CD8-positive, alpha-beta memory T cell (primary cell): ENCODE measurements at regions of chr9 and their contacts with region 1.

Region 1: DNA sequence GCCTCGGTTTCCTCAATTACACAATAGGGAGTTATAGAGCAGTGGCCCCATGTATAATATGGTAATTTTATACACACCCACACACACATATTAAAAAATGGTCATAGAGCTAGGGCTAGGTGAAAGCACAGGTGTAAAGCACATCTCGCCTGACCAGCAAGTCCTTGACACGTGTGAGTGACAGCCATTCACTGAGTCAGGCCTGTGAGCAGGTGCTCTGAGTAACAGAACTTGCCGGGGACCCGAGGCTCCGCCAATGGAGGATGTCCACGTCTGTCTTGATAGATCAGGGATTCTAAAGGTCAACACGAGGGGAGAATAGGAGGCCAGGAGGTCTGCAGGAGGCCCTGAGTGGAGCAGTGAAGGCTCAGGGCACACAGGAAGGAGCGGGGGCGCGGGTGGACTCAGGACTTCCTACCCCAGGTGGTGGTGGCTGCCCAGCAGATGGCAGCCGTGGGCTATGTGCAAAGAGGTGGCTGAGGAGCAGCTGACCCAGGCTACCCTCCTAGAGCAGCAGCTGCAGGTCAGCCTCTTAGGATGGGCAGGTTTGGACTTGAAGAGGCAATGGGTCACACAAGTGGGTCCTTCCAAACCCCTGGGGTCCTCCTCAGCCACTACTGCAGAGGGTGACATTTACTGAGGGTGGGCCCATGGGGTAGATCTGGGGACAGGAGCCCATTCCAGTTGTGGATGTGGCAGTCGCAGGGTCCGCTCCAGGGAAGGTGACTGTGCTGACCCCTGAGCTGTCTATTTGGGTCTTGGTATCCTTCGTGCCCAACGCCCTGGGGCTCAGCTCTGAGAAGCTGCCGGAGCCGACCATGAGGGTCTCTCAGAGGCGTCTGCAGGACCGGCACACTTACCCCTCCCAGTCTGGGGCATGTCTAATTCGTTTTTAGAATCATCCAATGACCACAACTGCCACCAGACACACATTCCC is 45.9 kb downstream of the PRRT1B start:
- DNase-seq: peak; percentile 66 to 84 (median 68)
- H3K4me3 ChIP-seq: no peak overlapping the region
- H3K4me3 Mint-ChIP-seq: peak overlapping the region in 6 of 7 donors; percentile 29 to 87 (median 48)
- H3K27ac ChIP-seq: no peak overlapping the region
- H3K27ac Mint-ChIP-seq: peak overlapping the region; percentile 76 to 91 (median 86)
- H3K4me1 ChIP-seq: peaks cover 16% of the 10 kb centered on the region
- H3K4me1 Mint-ChIP-seq: peaks cover 25 to 51% (median 38%) of the 10 kb centered on the region in 3 donors
- H3K27me3 ChIP-seq: no peaks in the 10 kb centered on the region
- H3K27me3 Mint-ChIP-seq: peaks cover 0 to 1% of the 10 kb centered on the region in 2 donors

Region 2: DNA sequence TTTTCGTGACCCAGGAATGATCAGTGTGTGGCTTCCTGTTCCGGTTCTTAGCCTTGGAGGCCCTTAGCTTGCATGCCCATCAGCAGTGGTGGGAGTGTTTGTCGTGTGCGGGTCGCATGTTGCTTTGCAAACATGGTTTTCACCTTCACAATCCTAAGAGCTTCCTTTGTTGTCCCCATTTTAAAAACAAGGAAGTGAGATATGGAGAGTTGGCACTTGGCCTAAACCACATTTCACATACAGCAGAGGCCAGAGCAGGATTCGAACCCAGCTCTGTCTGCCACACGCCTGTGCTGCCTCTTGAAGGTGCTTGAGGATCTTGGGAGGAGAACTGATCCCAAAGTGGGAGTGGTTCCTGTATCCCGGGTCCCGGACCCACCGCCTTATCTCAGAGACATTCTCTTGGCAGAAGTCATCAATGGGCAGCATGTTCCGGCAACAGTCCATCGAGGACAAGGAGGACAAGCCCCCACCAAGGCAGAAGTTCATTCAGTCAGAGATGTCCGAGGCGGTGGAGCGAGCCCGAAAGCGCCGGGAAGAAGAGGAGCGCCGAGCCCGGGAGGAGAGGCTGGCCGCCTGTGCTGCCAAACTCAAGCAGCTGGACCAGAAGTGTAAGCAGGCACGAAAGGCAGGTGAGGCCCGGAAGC is 126.7 kb before region 1 on chr9:
- CTCF ChIA-PET with region 1: no interaction called
- POLR2A ChIA-PET with region 1: no interaction called
- DNase-seq: no peak
- H3K4me3 ChIP-seq: no peak overlapping the region
- H3K4me3 Mint-ChIP-seq: peak overlapping the region in 1 of 7 donors; percentile 74
- H3K27ac ChIP-seq: no peak overlapping the region
- H3K27ac Mint-ChIP-seq: no peak overlapping the region
- H3K4me1 ChIP-seq: no peaks in the 10 kb centered on the region
- H3K4me1 Mint-ChIP-seq: peaks cover 9 to 18% (median 11%) of the 10 kb centered on the region in 3 donors
- H3K27me3 ChIP-seq: no peaks in the 10 kb centered on the region
- H3K27me3 Mint-ChIP-seq: no peaks in the 10 kb centered on the region

Region 3: GRCh38 chr9:131603199-131603598 is 12.0 kb after region 1 on chr9:
- CTCF ChIA-PET with region 1: interaction called, 10 read pairs
- POLR2A ChIA-PET with region 1: interaction called, 3 read pairs
- DNase-seq: no peak
- H3K4me3 ChIP-seq: no peak overlapping the region
- H3K4me3 Mint-ChIP-seq: no peak overlapping the region
- H3K27ac ChIP-seq: no peak overlapping the region
- H3K27ac Mint-ChIP-seq: peak overlapping the region in 4 of 8 donors; percentile 7 to 85 (median 28)
- H3K4me1 ChIP-seq: no peaks in the 10 kb centered on the region
- H3K4me1 Mint-ChIP-seq: peaks cover 6 to 14% (median 9%) of the 10 kb centered on the region in 3 donors
- H3K27me3 ChIP-seq: no peaks in the 10 kb centered on the region
- H3K27me3 Mint-ChIP-seq: no peaks in the 10 kb centered on the region

Region 4: GRCh38 chr9:131678499-131679111 is 87.4 kb after region 1 on chr9:
- CTCF ChIA-PET with region 1: interaction called, 19 read pairs
- POLR2A ChIA-PET with region 1: no interaction called
- DNase-seq: peak in 4 of 5 donors; percentile 53 to 92 (median 66)
- H3K4me3 ChIP-seq: peak overlapping the region; percentile 16
- H3K4me3 Mint-ChIP-seq: peak overlapping the region; percentile 41 to 94 (median 82)
- H3K27ac ChIP-seq: peak overlapping the region; percentile 52
- H3K27ac Mint-ChIP-seq: peak overlapping the region; percentile 89 to 99 (median 96)
- H3K4me1 ChIP-seq: peaks cover 54% of the 10 kb centered on the region
- H3K4me1 Mint-ChIP-seq: peaks cover 77 to 100% (median 99%) of the 10 kb centered on the region in 3 donors
- H3K27me3 ChIP-seq: no peaks in the 10 kb centered on the region
- H3K27me3 Mint-ChIP-seq: no peaks in the 10 kb centered on the region

Region 5: GRCh38 chr9:131733541-131734061 is 142.4 kb after region 1 on chr9:
- CTCF ChIA-PET with region 1: interaction called, 119 read pairs
- POLR2A ChIA-PET with region 1: interaction called, 3 read pairs
- DNase-seq: peak in 4 of 5 donors; percentile 33 to 65 (median 44)
- H3K4me3 ChIP-seq: peak overlapping the region; percentile 52
- H3K4me3 Mint-ChIP-seq: peak overlapping the region; percentile 73 to 90 (median 84)
- H3K27ac ChIP-seq: peak overlapping the region; percentile 61
- H3K27ac Mint-ChIP-seq: peak overlapping the region; percentile 78 to 99 (median 92)
- H3K4me1 ChIP-seq: peaks cover 95% of the 10 kb centered on the region
- H3K4me1 Mint-ChIP-seq: peaks cover 86 to 95% (median 93%) of the 10 kb centered on the region in 3 donors
- H3K27me3 ChIP-seq: no peaks in the 10 kb centered on the region
- H3K27me3 Mint-ChIP-seq: no peaks in the 10 kb centered on the region

Region 6: GRCh38 chr9:131739980-131740648 is 148.9 kb after region 1 on chr9 and contains the start of gene RAPGEF1:
- CTCF ChIA-PET with region 1: interaction called, 119 read pairs
- POLR2A ChIA-PET with region 1: interaction called, 3 read pairs
- DNase-seq: peak; percentile 73 to 86 (median 78)
- H3K4me3 ChIP-seq: peak within 1 kb of the TSS; percentile 51
- H3K4me3 Mint-ChIP-seq: peak within 1 kb of the TSS; percentile 90 to 98 (median 94)
- H3K27ac ChIP-seq: peak within 1 kb of the TSS; percentile 33
- H3K27ac Mint-ChIP-seq: peak within 1 kb of the TSS; percentile 81 to 98 (median 94)
- H3K4me1 ChIP-seq: peaks cover 62% of the 10 kb centered on the region
- H3K4me1 Mint-ChIP-seq: peaks cover 50 to 67% (median 61%) of the 10 kb centered on the region in 3 donors
- H3K27me3 ChIP-seq: no peaks in the 10 kb centered on the region
- H3K27me3 Mint-ChIP-seq: peaks cover 0 to 2% of the 10 kb centered on the region in 2 donors
- total RNA-seq, gene RAPGEF1: 145 to 148 TPM

Region 7: DNA sequence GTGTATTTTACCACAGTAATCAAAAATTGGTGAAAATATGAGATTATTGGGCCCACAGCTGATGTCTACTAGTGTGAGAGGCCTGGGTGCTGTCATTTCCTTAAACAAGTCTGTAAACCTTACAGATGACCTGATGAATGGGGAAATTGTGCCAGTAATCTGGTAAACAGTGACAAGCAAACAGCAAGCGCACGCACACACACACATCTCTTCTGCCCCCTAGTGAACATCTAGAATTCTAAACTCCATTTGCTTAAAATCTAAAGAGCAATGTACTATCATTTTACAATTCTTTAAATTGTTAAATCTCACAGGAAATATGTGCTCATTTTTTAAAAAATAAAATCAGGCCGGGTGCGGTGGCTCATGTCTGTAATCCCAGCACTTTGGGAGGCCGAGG is 156.2 kb after region 1 on chr9:
- CTCF ChIA-PET with region 1: interaction called, 119 read pairs
- POLR2A ChIA-PET with region 1: interaction called, 3 read pairs
- DNase-seq: peak in 1 of 5 donors; percentile 39
- H3K4me3 ChIP-seq: no peak overlapping the region
- H3K4me3 Mint-ChIP-seq: no peak overlapping the region
- H3K27ac ChIP-seq: no peak overlapping the region
- H3K27ac Mint-ChIP-seq: peak overlapping the region in 2 of 8 donors; percentile 33 to 57
- H3K4me1 ChIP-seq: peaks cover 27% of the 10 kb centered on the region
- H3K4me1 Mint-ChIP-seq: peaks cover 22 to 38% (median 37%) of the 10 kb centered on the region in 3 donors
- H3K27me3 ChIP-seq: no peaks in the 10 kb centered on the region
- H3K27me3 Mint-ChIP-seq: peaks cover 0 to 2% of the 10 kb centered on the region in 2 donors